ENCODE measurements at regions of chr3 and their contacts with region 1.

Region 1: GRCh38 chr3:101195951-101196713 is 124.2 kb downstream of the IMPG2 start:
- DNase-seq: no peak
- ATAC-seq: peak; percentile 95

Region 2: DNA sequence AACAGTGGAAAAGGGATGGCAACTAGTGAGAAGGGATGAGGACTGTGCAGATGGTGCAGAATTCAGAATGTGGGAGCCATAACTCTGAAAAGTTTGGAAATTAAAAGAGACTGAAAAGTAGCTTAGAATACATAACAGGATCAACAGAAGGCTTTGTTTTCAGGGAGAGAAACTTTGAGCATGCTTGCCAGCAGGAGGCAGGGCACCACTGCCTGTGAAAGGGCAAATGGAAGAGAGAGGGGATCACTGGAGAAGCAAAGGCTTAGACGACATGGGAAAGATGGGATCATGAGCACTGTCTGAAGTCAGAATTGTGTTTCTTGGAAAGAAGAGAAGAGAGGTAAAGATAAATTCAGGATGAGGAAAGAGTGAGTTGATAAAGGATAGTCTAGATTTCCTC is 302.5 kb before region 1 on chr3:
- intact Hi-C with region 1: loop called (anchors 5 kb)
- DNase-seq: no peak
- ATAC-seq: peak; percentile 66

Region 3: GRCh38 chr3:101069901-101070798 is 126.0 kb before region 1 on chr3:
- intact Hi-C with region 1: loop called (anchors 2 kb)
- DNase-seq: peak; percentile 77
- ATAC-seq: peak; percentile 84

Region 4: DNA sequence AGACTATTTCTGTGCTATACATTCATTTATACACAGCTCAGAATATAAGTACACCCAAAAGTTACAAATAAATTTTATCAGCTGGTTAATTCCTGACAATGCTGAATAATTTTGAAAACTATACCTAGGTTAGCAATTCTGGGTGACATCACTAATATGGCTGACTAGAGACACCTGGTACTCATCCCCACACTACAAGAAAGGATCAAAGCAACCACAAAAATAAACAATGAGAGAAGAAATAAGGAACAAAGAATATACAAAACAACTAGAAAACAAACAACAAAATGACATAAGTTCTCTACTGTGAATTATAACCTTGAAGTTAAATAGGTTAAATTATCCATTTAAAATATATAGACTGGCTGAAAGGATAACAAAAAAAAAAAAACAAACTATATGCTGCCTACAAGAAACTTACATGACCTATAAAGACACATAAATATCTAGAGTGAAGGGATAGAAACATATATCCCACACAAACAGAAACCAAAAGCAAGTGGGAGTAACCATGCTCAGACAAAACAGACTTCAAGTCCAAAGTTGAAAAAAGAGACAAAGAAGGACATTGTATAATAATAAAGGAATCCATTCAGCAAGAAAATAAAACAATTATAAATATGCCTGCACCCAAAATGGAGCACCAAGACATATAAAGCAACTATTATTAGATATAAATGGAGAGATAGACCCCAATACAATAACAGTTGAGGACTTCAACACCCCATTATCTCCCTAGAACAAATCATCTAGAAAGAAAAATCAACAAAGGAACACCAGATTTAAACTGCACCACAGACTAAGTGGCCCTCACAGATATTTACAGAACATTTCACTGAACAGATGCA is 66.5 kb after region 1 on chr3:
- intact Hi-C with region 1: no loop called
- DNase-seq: no peak
- ATAC-seq: no peak

Measured in Right ventricle myocardium superior (tissue), 1 donor.